ENCODE measurements at regions of chr3 and their contacts with region 1.

Region 1: DNA sequence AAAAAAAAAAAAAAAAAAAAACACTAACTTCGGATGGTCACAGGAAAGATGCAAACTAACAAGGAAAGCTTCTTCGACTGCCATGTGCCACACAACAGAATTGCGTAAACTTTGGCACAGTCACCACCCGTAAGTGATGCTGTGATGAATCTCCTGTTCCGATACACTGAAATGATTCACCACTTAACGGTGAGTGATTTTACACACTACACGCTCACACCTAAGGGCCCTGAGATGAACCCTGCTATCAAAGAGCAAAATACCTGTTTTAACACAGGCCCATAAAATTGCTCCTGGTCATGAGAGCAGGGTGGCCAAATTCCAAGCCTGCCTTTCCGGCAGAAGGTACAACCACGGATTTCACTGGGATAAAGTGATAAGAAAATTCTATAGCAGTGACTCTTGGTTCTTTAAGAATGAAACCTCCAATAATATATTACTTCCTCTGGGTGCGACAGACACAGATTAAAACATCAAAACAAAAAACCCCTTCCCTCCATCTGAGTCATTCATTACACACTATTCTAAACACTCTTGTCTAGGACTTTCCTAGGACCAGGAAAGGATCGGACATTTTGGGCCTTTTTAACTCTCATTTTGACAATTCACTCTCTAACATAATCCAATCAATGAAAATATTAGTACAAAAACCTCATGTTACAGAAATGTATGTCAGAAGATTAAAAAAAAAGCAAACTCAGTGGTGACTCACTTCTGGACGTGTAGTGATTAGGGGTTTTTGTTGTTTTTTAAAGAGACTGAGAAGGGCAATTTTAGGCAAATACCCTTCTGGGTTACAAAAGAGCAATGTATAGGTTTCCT is 28.3 kb downstream of the LRIG1 start:
- DNase-seq: peak; percentile 61
- H3K4me3 Mint-ChIP-seq: peak overlapping the region; percentile 64
- H3K27ac Mint-ChIP-seq: peak overlapping the region; percentile 90
- H3K4me1 Mint-ChIP-seq: peaks cover 70% of the 10 kb centered on the region
- H3K27me3 Mint-ChIP-seq: peaks cover 1% of the 10 kb centered on the region

Region 2: DNA sequence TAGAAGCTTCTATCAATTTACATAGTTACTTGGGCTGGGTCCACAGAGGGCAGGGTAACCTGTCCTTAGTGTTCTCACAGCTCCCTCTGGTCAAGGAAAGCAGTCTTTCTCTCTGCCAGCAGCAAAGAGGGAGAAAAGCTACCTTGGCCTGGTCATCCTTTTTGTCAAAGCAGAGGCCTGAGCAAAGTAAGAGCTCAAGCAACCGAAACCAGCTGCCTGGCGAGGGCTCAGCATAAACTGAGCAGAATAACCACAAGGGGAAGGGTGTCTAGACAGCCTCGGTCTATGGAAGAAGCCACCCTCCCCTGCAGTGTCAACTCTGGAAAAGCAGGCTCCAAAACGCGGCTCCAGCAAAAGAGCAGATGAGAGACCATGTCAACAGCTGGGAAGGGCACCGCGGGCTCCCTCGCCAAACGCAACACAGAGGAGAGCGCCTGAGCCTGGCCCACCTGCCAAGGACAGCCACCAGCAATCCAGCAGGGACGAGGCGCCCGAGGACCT is 10.9 kb after region 1 on chr3:
- CTCF ChIA-PET with region 1: interaction called, 7 read pairs
- POLR2A ChIA-PET with region 1: interaction called, 50 read pairs
- DNase-seq: no peak
- H3K4me3 Mint-ChIP-seq: peak overlapping the region; percentile 6
- H3K27ac Mint-ChIP-seq: no peak overlapping the region
- H3K4me1 Mint-ChIP-seq: peaks cover 82% of the 10 kb centered on the region
- H3K27me3 Mint-ChIP-seq: no peaks in the 10 kb centered on the region

Region 3: GRCh38 chr3:66490214-66490613 is 17.7 kb after region 1 on chr3:
- CTCF ChIA-PET with region 1: interaction called, 13 read pairs
- POLR2A ChIA-PET with region 1: interaction called, 50 read pairs
- DNase-seq: peak; percentile 56
- H3K4me3 Mint-ChIP-seq: peak overlapping the region; percentile 61
- H3K27ac Mint-ChIP-seq: peak overlapping the region; percentile 83
- H3K4me1 Mint-ChIP-seq: peaks cover 89% of the 10 kb centered on the region
- H3K27me3 Mint-ChIP-seq: no peaks in the 10 kb centered on the region

Region 4: DNA sequence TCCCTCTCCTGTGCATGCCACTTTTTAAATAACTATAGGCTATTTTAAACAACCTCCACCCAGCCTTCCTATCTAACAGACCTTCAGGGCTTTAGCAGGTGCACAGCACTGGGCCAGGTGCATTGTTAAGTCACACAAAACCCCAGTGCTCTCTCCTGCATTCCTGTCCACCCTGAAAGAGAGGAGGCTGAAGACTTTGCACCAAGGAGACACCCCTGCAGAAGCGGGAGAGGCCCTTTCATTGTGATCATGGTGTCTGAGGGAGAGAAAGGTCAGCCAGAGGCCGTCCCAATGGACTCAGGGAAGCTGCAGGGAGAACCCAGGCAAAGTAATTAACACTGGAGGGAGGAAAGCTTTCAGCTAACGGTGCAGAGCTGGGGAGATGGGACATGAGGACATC is 23.1 kb after region 1 on chr3:
- CTCF ChIA-PET with region 1: interaction called, 13 read pairs
- POLR2A ChIA-PET with region 1: interaction called, 50 read pairs
- DNase-seq: no peak
- H3K4me3 Mint-ChIP-seq: peak overlapping the region; percentile 14
- H3K27ac Mint-ChIP-seq: peak overlapping the region; percentile 61
- H3K4me1 Mint-ChIP-seq: peaks cover 89% of the 10 kb centered on the region
- H3K27me3 Mint-ChIP-seq: no peaks in the 10 kb centered on the region

Region 5: DNA sequence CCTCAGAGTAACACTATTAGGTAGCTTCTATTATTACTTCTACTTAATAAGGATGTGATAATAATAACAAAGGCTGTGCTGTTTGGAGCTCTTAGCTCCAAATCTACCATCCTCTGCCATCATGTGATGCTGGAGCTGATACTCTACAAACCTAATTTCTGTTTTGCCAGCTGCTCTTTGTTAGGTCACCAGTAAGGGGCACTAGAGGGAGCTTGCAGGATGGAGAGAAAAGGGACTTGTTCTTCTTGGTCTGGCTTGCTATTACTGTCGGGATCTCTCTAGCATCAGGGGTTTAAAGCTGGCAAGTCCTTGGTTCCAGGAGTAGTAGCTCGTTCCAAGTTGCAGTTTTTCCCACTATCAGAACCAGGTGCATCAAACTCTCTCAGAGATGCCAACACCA is 330.7 kb after region 1 on chr3:
- CTCF ChIA-PET with region 1: no interaction called
- POLR2A ChIA-PET with region 1: no interaction called
- DNase-seq: no peak
- H3K4me3 Mint-ChIP-seq: no peak overlapping the region
- H3K27ac Mint-ChIP-seq: no peak overlapping the region
- H3K4me1 Mint-ChIP-seq: no peaks in the 10 kb centered on the region
- H3K27me3 Mint-ChIP-seq: peaks cover 2% of the 10 kb centered on the region